A673 (cell line): ENCODE measurements at regions of chr12 and their contacts with region 1.

Region 1: GRCh38 chr12:91382081-91382543 is 199.5 kb upstream of the DCN start:
- DNase-seq: peak; percentile 82
- H3K4me3 ChIP-seq: peak overlapping the region; percentile 37
- H3K27ac ChIP-seq: no peak overlapping the region
- H3K4me1 ChIP-seq: peaks cover 19% of the 10 kb centered on the region
- H3K27me3 ChIP-seq: peaks cover 8% of the 10 kb centered on the region
- CTCF ChIP-seq: peak; percentile 93

Region 2: DNA sequence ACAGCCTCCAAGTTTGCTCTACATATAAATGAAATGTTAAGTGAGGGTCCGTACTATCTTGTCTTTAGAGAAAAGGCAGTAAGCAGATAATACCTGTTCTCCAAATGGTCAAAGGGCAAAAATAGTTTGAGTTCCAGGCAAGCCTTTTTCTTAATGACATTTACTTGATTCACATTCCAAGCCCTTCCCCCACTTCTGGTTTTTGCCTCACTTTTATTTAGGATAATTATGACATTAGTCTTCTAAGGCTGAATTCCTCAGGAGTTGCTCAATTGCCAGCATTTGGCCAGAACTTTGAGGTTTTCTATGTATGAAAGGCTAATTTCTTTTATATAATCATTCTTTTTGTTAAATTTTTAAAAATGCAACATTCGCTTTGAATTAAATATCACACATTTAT is 1967.3 kb before region 1 on chr12:
- CTCF ChIA-PET with region 1: no interaction called
- POLR2A ChIA-PET with region 1: no interaction called
- intact Hi-C with region 1: no loop called
- DNase-seq: peak; percentile 28
- H3K4me3 ChIP-seq: no peak overlapping the region
- H3K27ac ChIP-seq: peak overlapping the region; percentile 35
- H3K4me1 ChIP-seq: peaks cover 52% of the 10 kb centered on the region
- H3K27me3 ChIP-seq: no peaks in the 10 kb centered on the region
- CTCF ChIP-seq: no peak

Region 3: GRCh38 chr12:91577586-91578539 is 195.8 kb after region 1 on chr12:
- CTCF ChIA-PET with region 1: no interaction called
- POLR2A ChIA-PET with region 1: no interaction called
- intact Hi-C with region 1: loop called (anchors 5 kb)
- DNase-seq: peak; percentile 39
- H3K4me3 ChIP-seq: no peak overlapping the region
- H3K27ac ChIP-seq: no peak overlapping the region
- H3K4me1 ChIP-seq: peaks cover 28% of the 10 kb centered on the region
- H3K27me3 ChIP-seq: peaks cover 18% of the 10 kb centered on the region
- CTCF ChIP-seq: peak; percentile 68

Region 4: GRCh38 chr12:92408072-92408900 is 1026.2 kb after region 1 on chr12:
- CTCF ChIA-PET with region 1: interaction called, 5 read pairs
- POLR2A ChIA-PET with region 1: no interaction called
- intact Hi-C with region 1: loop called (anchors 2 kb)
- DNase-seq: peak; percentile 64
- H3K4me3 ChIP-seq: no peak overlapping the region
- H3K27ac ChIP-seq: no peak overlapping the region
- H3K4me1 ChIP-seq: no peaks in the 10 kb centered on the region
- H3K27me3 ChIP-seq: no peaks in the 10 kb centered on the region
- CTCF ChIP-seq: peak; percentile 78

Region 5: DNA sequence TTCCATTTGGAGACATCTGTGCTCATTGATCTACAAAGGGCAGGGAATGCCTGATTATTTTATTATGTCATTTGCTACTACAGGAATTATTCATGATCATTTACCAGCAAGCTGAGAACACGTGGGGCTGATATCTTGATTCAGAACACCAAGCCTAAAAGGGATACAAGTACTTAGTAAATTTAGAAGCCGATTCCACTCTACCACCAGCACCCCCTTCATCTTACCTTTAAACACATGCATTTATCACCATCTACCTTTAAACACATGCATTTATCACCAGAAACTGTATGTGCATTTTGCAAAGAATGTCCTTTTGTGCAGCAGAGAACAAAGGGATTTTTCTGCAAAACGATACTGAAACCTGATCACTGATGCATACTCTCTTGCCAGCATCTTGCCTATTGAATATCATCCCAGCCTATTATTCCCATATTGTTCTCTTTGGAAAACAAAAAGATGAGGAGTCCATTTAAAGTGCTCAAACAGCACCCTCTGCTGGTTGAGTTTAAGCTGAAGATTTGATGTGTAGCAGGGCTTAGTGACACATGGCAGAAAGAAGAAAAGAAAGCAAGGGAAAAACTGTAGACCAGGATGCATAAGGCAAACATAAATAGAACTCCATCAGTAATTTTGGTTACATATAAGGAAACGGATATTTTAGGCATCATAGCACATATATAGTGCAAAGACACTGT is 1188.1 kb after region 1 on chr12:
- CTCF ChIA-PET with region 1: interaction called, 9 read pairs
- POLR2A ChIA-PET with region 1: no interaction called
- intact Hi-C with region 1: loop called (anchors 1 kb)
- DNase-seq: peak; percentile 87
- H3K4me3 ChIP-seq: no peak overlapping the region
- H3K27ac ChIP-seq: no peak overlapping the region
- H3K4me1 ChIP-seq: no peaks in the 10 kb centered on the region
- H3K27me3 ChIP-seq: no peaks in the 10 kb centered on the region
- CTCF ChIP-seq: peak; percentile 85

Region 6: GRCh38 chr12:92608151-92609091 is 1226.3 kb after region 1 on chr12:
- CTCF ChIA-PET with region 1: interaction called, 10 read pairs
- POLR2A ChIA-PET with region 1: interaction called, 3 read pairs
- intact Hi-C with region 1: loop called (anchors 10 kb)
- DNase-seq: peak; percentile 58
- H3K4me3 ChIP-seq: no peak overlapping the region
- H3K27ac ChIP-seq: no peak overlapping the region
- H3K4me1 ChIP-seq: no peaks in the 10 kb centered on the region
- H3K27me3 ChIP-seq: no peaks in the 10 kb centered on the region
- CTCF ChIP-seq: peak; percentile 60

Region 7: GRCh38 chr12:92649511-92650227 is 1267.6 kb after region 1 on chr12:
- CTCF ChIA-PET with region 1: interaction called, 10 read pairs
- POLR2A ChIA-PET with region 1: no interaction called
- intact Hi-C with region 1: loop called (anchors 1 kb)
- DNase-seq: peak; percentile 76
- H3K4me3 ChIP-seq: no peak overlapping the region
- H3K27ac ChIP-seq: no peak overlapping the region
- H3K4me1 ChIP-seq: no peaks in the 10 kb centered on the region
- H3K27me3 ChIP-seq: peaks cover 8% of the 10 kb centered on the region
- CTCF ChIP-seq: peak; percentile 75